BJ (cell line): ENCODE measurements at regions of chr19 and their contacts with region 1.

Region 1: DNA sequence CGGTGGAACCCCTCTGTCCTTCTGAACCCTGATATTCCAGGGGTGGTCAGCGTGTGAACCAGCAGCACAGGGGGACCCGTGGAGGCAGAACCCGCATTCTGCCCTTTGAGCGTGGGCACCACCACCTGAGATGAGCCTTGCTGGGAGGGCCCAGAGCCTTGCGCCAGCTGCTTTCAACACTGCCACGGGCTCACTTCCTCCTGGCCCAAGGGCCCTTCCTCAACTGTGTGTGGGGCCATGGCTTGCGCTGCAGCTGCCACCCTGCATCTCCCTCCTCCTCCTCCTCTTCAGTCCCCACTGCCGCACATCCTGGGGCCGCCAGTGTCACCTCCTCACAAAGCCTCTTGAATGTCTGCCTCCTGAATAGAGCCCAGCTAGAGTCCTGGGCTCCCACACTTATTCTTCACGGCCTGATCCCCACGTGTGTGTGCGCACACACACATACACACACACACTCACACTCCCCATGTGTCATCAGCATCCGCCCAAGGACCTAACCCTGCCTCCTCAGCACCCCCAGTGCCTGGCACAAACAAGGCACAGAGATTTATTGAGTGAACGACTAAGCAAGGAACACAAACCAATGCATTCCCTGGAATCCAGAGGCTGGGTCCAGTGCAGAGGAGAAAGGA is 26.9 kb upstream of the TMEM160 start:
- DNase-seq: no peak
- H3K4me3 ChIP-seq: no peak overlapping the region
- H3K27me3 ChIP-seq: no peaks in the 10 kb centered on the region
- CTCF ChIP-seq: no peak

Region 2: GRCh38 chr19:46898731-46899130 is 176.6 kb before region 1 on chr19:
- CTCF ChIA-PET with region 1: no interaction called
- POLR2A ChIA-PET with region 1: interaction called, 15 read pairs
- DNase-seq: no peak
- H3K4me3 ChIP-seq: no peak overlapping the region
- H3K27me3 ChIP-seq: no peaks in the 10 kb centered on the region
- CTCF ChIP-seq: no peak

Region 3: GRCh38 chr19:47124937-47125668 is 49.8 kb after region 1 on chr19:
- CTCF ChIA-PET with region 1: interaction called, 29 read pairs
- POLR2A ChIA-PET with region 1: interaction called, 8 read pairs
- DNase-seq: no peak
- H3K4me3 ChIP-seq: no peak overlapping the region
- H3K27me3 ChIP-seq: no peaks in the 10 kb centered on the region
- CTCF ChIP-seq: peak; percentile 61